A549 (cell line): ENCODE measurements at regions of chr4 and their contacts with region 1.

Region 1: DNA sequence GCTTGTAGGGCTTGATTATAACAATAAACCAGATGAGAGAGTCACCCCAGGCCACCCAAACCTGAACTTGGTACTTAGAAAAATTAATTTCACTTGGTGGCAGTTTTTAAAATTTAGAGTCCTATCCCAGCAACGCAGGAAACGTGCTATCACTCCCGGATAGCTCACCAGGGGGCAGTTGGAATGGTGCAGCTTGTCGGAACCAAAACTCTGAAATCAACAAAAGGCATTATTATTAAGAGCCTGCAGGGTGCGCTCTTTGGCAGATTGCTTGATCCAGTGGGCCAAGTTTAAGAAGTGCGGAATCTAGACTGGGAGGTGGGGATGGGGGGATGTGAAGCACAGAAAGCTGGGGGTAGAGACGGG is 2.4 kb downstream of the FRAS1 start:
- DNase-seq: peak; percentile 57 to 87
- ATAC-seq: peak; percentile 46 to 56; a peak in 5 of 6 replicates
- H3K4me3 ChIP-seq: peak overlapping the region; percentile 94
- H3K27ac ChIP-seq: peak overlapping the region; percentile 86 to 95
- H3K4me1 ChIP-seq: 0 out of 3 replicates have a peak, but pooled peaks cover 4% of the 10 kb centered on the region
- CTCF ChIP-seq: peak; percentile 65
- EP300 ChIP-seq: no peak
- POLR2A ChIP-seq: no peak
- RAD21 ChIP-seq: peak; percentile 71 to 72

Region 2: DNA sequence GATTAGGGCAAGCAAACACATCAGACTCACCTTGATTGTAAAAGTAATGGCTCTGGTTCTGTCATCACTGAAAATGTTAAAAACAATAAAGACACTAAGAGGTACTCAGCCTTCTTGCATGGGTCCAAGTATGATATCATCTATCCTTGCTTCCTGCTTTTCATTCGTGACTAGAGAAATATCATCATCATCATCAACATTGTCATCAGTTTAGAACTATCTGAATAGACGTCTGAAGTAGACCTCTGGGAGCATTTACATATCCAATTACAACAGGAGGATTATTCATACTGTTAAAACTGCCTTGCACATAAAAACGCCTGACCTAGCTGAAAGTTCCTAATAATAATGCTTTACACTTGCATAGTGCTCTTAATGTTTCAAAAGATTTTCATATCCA is 12.1 kb before region 1 on chr4:
- CTCF ChIA-PET with region 1: interaction called, 16 read pairs
- POLR2A ChIA-PET with region 1: no interaction called
- DNase-seq: no peak
- ATAC-seq: no peak
- H3K4me3 ChIP-seq: no peak overlapping the region
- H3K27ac ChIP-seq: no peak overlapping the region
- H3K4me1 ChIP-seq: no peaks in the 10 kb centered on the region
- CTCF ChIP-seq: no peak
- EP300 ChIP-seq: no peak
- POLR2A ChIP-seq: no peak
- RAD21 ChIP-seq: no peak

Region 3: DNA sequence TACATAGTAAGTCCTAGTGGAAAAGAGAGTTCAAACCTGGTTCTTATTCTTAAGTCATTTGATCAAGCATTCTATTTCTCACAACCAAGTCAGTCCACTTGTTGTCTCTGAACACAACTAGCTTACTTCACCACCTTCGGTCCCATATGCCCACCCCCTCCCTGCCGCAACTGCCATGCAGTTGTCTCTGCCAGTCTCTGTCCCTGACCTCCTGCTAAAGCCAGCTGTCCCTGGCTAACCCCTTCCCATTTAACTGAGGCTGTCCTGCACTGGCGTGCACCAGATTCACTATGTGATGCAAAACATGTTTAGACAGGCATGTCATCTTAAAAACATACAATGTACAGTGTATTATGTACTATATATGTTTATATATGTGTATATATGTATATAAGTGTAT is 10.4 kb after region 1 on chr4:
- CTCF ChIA-PET with region 1: interaction called, 21 read pairs
- POLR2A ChIA-PET with region 1: no interaction called
- DNase-seq: no peak
- ATAC-seq: no peak
- H3K4me3 ChIP-seq: no peak overlapping the region
- H3K27ac ChIP-seq: no peak overlapping the region
- H3K4me1 ChIP-seq: no peaks in the 10 kb centered on the region
- CTCF ChIP-seq: no peak
- EP300 ChIP-seq: no peak
- POLR2A ChIP-seq: no peak
- RAD21 ChIP-seq: no peak

Region 4: GRCh38 chr4:78517050-78517652 is 457.6 kb after region 1 on chr4:
- CTCF ChIA-PET with region 1: interaction called, 31 read pairs
- POLR2A ChIA-PET with region 1: no interaction called
- DNase-seq: peak; percentile 7 to 16
- ATAC-seq: peak in 1 of 2 experiments; percentile 57; a peak in 1 of 6 replicates
- H3K4me3 ChIP-seq: no peak overlapping the region
- H3K27ac ChIP-seq: no peak overlapping the region
- H3K4me1 ChIP-seq: no peaks in the 10 kb centered on the region
- CTCF ChIP-seq: peak; percentile 65
- EP300 ChIP-seq: no peak
- POLR2A ChIP-seq: no peak
- RAD21 ChIP-seq: peak; percentile 69 to 79